ENCODE measurements at regions of chr12 and their contacts with region 1.

Region 1: GRCh38 chr12:75939016-75939642 is 92.4 kb downstream of the PHLDA1 start:
- DNase-seq: no peak
- ATAC-seq: peak in 1 of 8 donors; percentile 25
- H3K4me3 ChIP-seq: no peak overlapping the region
- H3K27ac ChIP-seq: no peak overlapping the region
- H3K4me1 ChIP-seq: peaks cover 0 to 35% (median 20%) of the 10 kb centered on the region in 9 donors
- H3K27me3 ChIP-seq: no peaks in the 10 kb centered on the region
- CTCF ChIP-seq: no peak

Region 2: GRCh38 chr12:75981247-75982168 is 42.4 kb after region 1 on chr12:
- intact Hi-C with region 1: loop called in 1 of 10 experiments (anchors 5 kb)
- DNase-seq: no peak
- ATAC-seq: no peak
- H3K4me3 ChIP-seq: no peak overlapping the region
- H3K27ac ChIP-seq: peak overlapping the region in 7 of 10 donors; percentile 15 to 62 (median 54)
- H3K4me1 ChIP-seq: peaks cover 6 to 58% (median 32%) of the 10 kb centered on the region in 9 donors
- H3K27me3 ChIP-seq: no peaks in the 10 kb centered on the region
- CTCF ChIP-seq: no peak

Measured in heart right ventricle (tissue), 16 donors.